HCT116 (cell line): ENCODE measurements at regions of chr9 and their contacts with region 1.

Region 1: GRCh38 chr9:22103650-22104575 is 94.8 kb upstream of the CDKN2B start:
- DNase-seq: no peak
- ATAC-seq: peak; percentile 11; the same call in 1 of the 2 replicates
- H3K4me3 ChIP-seq: no peak overlapping the region
- H3K27ac ChIP-seq: peak overlapping the region; percentile 69; the same call in 1 of the 2 replicates
- H3K4me1 ChIP-seq: peaks cover 26 to 27% of the 10 kb centered on the region in 2 experiments
- H3K27me3 ChIP-seq: no peaks in the 10 kb centered on the region
- CTCF ChIP-seq: no peak
- POLR2A ChIP-seq: no peak
- RAD21 ChIP-seq: no peak

Region 2: GRCh38 chr9:22119537-22120158 is 15.7 kb after region 1 on chr9:
- CTCF ChIA-PET with region 1: interaction called, 8 read pairs
- POLR2A ChIA-PET with region 1: no interaction called
- RAD21 ChIA-PET with region 1: interaction called in 1 of 2 experiments, 5 read pairs
- intact Hi-C with region 1: loop called (anchors 2 kb)
- DNase-seq: no peak
- ATAC-seq: peak; percentile 87
- H3K4me3 ChIP-seq: no peak overlapping the region
- H3K27ac ChIP-seq: no peak overlapping the region
- H3K4me1 ChIP-seq: peaks cover 2 to 10% of the 10 kb centered on the region in 2 experiments; a peak in 1 of 4 replicates
- H3K27me3 ChIP-seq: no peaks in the 10 kb centered on the region
- CTCF ChIP-seq: peak; percentile 61 to 68 (median 65)
- POLR2A ChIP-seq: no peak
- RAD21 ChIP-seq: peak; percentile 87

Region 3: DNA sequence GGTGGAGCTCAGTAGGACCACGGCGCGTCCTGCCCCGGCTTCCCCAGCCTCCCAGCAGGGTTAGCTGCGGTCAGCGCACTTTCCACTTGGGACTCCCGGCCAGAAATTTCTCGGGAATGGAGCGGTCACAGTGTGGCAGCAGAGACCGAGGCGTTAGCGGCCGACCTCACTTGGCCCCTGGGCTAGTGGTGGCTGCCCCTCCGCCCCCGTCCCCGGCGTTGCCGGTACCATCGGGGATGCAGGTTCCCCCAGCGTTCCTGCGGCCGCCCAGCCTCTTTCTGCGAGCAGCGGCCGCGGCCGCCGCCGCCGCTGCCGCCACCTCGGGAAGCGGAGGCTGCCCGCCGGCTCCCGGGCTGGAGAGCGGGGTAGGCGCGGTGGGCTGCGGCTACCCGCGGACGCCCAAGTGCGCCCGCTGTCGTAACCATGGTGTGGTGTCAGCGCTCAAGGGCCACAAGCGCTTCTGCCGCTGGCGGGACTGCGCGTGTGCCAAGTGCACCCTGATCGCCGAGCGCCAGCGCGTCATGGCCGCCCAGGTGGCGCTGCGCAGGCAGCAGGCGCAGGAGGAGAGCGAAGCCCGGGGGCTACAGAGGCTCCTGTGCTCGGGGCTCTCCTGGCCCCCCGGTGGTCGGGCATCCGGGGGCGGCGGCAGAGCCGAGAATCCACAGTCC is 343.2 kb after region 1 on chr9:
- CTCF ChIA-PET with region 1: no interaction called
- POLR2A ChIA-PET with region 1: no interaction called
- RAD21 ChIA-PET with region 1: no interaction called
- intact Hi-C with region 1: no loop called
- DNase-seq: no peak
- ATAC-seq: no peak
- H3K4me3 ChIP-seq: no peak overlapping the region
- H3K27ac ChIP-seq: no peak overlapping the region
- H3K4me1 ChIP-seq: no peaks in the 10 kb centered on the region
- H3K27me3 ChIP-seq: peaks cover 24% of the 10 kb centered on the region
- CTCF ChIP-seq: no peak
- POLR2A ChIP-seq: no peak
- RAD21 ChIP-seq: no peak